Right ventricle myocardium superior (tissue), 1 donor: ENCODE measurements at regions of chr6 and their contacts with region 1.

Region 1: GRCh38 chr6:43667245-43668150 is 20.1 kb downstream of the MRPS18A start:
- DNase-seq: peak; percentile 88
- ATAC-seq: peak; percentile 63

Region 2: GRCh38 chr6:43477235-43478007 is 190.1 kb before region 1 on chr6 and contains the start of gene TJAP1:
- intact Hi-C with region 1: no loop called
- DNase-seq: peak; percentile 96
- ATAC-seq: peak; percentile 100
- total RNA-seq, gene TJAP1: 20.5 TPM

Region 3: DNA sequence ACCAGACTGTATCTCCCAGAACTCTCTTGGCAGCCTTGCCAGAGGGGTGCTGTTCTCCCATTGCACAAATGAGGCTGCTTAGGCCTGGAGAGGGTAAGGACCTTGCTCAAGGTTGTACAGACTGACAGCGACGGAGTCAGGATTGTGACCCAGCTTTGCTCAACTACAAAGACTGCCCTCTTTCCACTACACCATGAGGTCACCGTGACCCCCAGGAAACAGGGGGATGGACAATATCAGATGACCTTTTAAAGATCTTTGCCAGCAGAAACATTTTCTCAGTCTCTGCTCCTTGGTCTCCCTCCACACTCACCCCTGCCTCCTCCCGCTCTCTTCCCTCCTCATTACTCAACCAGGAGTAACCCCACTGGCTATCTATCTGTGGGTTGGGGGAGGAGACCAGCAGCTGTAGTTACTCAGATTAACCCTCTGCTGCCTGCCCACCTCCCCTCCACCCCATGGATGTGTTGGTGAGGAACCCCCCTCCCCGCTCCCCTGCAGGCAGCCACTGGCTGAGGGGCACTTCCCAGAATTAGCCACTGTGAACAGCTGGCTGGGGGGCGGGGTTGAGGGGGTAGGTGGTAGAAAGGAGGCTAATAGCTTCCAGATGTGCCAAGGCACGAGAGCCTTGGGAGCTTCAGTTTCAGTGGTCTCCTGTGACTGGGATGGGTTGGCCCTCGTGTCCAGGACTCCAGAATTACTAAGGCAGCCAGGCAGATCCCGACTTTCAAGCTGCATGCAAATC is 47.0 kb after region 1 on chr6:
- intact Hi-C with region 1: loop called (anchors 5 kb)
- DNase-seq: no peak
- ATAC-seq: no peak

Region 4: DNA sequence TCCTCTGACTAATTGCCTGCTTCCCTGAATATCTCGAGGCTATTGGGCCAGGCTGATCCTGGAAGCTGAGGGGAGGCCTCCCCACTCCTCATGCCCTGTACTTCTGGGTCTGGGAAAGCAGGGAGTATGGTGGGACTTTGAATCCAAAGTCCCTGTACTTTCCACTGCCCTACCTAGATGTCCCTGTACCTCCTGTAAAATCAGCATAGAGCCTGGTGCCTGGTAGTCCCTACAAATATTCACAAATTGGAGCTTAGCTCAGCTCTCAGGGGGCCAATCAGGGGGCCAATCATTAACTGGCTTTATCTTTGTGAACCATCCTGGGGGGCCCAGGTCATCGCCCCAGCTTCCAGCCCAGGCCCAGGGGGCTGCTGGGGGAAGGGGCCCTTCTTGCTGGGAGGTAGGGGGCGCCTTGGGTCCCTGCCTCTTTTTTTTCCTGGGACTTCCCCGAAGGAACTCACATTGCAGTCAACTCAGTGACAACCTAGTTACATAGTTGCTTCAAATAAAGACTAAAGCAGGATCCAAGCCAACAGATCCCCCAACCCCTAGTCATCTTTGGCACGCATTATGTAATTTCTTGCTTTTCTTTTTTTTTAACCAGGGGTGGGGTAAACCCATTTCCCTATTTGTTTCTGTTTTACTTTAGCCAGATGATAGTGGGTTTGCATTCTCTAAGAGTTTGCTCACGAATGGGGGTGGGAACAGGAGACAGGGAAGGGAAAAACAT is 95.6 kb after region 1 on chr6:
- intact Hi-C with region 1: loop called (anchors 5 kb)
- DNase-seq: no peak
- ATAC-seq: no peak